ENCODE measurements at regions of chr14 and their contacts with region 1.

Region 1: DNA sequence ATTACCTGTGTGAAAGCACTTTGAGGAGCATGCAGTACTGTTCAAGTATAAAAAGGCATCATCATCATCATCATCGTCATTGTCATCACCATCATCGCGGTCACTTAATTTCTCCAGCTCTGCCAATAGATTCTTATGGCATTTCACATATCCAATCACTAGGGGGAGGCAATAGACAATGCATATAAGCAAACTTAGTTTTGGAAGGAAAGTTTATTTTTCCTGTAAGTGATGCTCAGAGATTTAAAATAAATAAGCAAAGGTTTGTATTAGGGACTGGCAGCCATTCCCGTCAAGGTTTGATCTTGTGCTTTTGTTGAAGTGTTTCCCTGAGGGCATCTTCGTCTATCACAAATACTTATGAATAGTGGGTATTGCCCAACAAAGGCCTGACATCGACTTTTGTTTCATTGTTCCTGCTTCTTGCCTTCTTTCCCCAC is 127.4 kb downstream of the KTN1 start:
- DNase-seq: no peak
- H3K4me3 ChIP-seq: no peak overlapping the region
- H3K27ac ChIP-seq: no peak overlapping the region
- H3K4me1 ChIP-seq: peaks cover 0 to 18% (median 12%) of the 10 kb centered on the region in 4 donors
- H3K27me3 ChIP-seq: no peaks in the 10 kb centered on the region
- CTCF ChIP-seq: peak; percentile 62 to 70 (median 64)
- EP300 ChIP-seq: no peak
- POLR2A ChIP-seq: no peak

Region 2: GRCh38 chr14:56339855-56340701 is 632.7 kb after region 1 on chr14:
- intact Hi-C with region 1: loop called (anchors 5 kb)
- DNase-seq: no peak
- H3K4me3 ChIP-seq: no peak overlapping the region
- H3K27ac ChIP-seq: peak overlapping the region in 1 of 4 donors; percentile 1
- H3K4me1 ChIP-seq: peaks cover 22 to 31% (median 31%) of the 10 kb centered on the region in 4 donors
- H3K27me3 ChIP-seq: no peaks in the 10 kb centered on the region
- CTCF ChIP-seq: peak; percentile 69 to 86 (median 76)
- EP300 ChIP-seq: no peak
- POLR2A ChIP-seq: no peak

Region 3: DNA sequence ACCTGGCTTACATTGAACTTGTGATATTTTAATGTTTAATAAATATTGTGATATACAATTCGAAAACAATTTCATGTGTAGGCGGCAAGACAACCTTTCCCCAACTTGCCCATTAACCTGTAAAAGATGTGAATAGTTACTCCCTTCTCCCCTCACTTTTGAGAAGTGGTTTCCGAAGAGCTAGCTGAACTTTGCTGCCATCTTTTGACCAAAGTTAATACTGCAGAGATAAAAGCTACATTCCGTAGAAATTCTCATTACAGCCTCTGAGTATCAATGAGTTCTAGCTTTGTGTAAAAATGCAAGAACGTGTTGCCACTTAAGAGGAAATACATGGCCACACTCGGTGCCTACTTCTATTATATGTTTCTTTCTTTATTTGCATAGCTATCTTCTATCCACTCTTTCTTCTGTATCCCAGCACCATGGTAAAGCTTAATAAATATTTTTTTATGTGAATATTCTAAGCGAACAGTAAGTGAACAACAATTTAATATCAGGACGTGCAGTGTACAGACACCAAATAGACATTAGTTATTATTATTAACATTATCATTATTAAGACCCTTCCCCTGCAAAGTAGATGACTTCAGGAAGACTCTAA is 767.1 kb after region 1 on chr14:
- intact Hi-C with region 1: loop called (anchors 5 kb)
- DNase-seq: no peak
- H3K4me3 ChIP-seq: no peak overlapping the region
- H3K27ac ChIP-seq: no peak overlapping the region
- H3K4me1 ChIP-seq: no peaks in the 10 kb centered on the region
- H3K27me3 ChIP-seq: peaks cover 0 to 10% (median 0%) of the 10 kb centered on the region in 4 donors
- CTCF ChIP-seq: peak; percentile 64 to 80 (median 73)
- EP300 ChIP-seq: no peak
- POLR2A ChIP-seq: no peak